Heart left ventricle (tissue), 16 donors: ENCODE measurements at regions of chrX and their contacts with region 1.

Region 1: GRCh38 chrX:14872851-14873675 is at the starts of genes FANCB and MOSPD2:
- DNase-seq: peak; percentile 93 to 96 (median 95)
- ATAC-seq: peak; percentile 99
- H3K4me3 ChIP-seq: peak within 1 kb of the TSS; percentile 59 to 99 (median 80)
- H3K27ac ChIP-seq: peak within 1 kb of the TSS in 11 of 12 donors; percentile 40 to 88 (median 79)
- H3K4me1 ChIP-seq: peaks cover 0 to 12% (median 1%) of the 10 kb centered on the region in 12 donors
- H3K27me3 ChIP-seq: no peaks in the 10 kb centered on the region
- CTCF ChIP-seq: no peak
- POLR2A ChIP-seq: peak in 1 of 2 donors; percentile 45
- total RNA-seq, gene FANCB: 0.16 to 1.6 (median 0.44) TPM
- total RNA-seq, gene MOSPD2: 4.4 to 14.7 (median 5.5) TPM

Region 2: DNA sequence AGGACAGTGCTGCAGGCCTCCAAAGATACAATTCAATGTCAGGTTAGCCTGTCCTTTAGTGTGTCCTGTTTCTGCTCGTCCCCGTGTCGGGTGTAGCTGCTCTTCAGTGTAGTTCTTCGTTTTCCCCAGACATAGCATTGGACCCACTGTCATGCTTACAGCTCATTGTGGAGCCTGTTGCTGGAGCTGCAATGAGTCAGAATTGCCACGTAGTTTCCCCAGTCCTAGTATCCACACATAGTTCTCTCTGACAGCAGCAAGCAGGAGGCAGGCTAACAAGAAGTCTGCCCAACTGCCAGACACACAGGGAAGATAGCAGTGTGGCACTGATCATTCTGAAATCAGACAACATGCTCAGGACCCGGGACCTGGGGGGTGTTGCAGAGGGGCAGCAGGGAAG is 49.4 kb after region 1 on chrX:
- intact Hi-C with region 1: loop called in 2 of 10 experiments (anchors 10 kb)
- DNase-seq: no peak
- ATAC-seq: peak in 3 of 4 donors; percentile 30 to 61 (median 52)
- H3K4me3 ChIP-seq: no peak overlapping the region
- H3K27ac ChIP-seq: no peak overlapping the region
- H3K4me1 ChIP-seq: peaks cover 0 to 6% (median 0%) of the 10 kb centered on the region in 12 donors
- H3K27me3 ChIP-seq: no peaks in the 10 kb centered on the region
- CTCF ChIP-seq: no peak
- POLR2A ChIP-seq: no peak